Naive thymus-derived CD8-positive, alpha-beta T cell (primary cell): ENCODE measurements at regions of chr5 and their contacts with region 1.

Region 1: DNA sequence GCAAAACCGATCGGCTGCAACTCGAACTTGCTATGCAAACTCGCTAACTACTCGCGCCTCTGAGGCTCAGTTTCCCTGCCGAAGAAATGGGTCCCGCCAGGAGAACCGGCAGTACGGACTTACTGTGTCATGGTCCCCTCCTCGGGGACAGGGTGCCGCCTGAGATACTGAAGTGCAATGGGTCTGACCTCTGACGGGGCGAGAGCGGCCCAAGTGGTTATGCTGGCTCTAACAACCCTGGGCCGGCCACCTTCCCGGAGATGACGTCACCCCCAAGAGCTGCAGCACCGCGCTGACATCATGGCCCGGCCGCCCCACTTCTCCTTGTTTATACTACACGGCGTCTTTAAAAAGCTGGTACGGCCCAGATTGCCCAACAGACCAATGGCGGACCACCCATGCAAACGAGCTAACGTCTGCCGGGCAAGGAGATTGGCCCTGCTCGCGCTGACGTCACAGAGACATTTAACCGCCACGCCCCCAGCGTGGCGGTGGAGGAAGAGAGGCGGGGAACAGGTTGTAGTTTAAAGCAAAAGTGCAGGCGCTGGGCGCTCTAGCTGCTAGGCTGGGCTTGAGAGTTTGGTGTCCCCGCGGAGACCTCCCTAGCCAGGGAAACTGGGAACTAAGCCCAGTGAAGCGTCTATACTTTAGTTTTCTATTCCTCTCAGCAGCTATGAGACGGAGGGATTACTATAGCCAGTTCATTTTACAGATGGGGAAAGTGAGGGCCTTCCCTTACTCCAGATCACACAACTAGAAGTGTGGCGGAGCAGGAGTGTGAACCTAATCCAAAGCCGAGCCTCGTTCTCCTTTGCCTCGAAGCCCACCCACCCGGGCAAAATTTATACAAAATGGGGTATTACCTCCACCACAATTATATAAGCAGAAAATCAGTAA is 654 bp upstream of the RNF44 start:
- DNase-seq: peak; percentile 88 to 100 (median 98)
- ATAC-seq: peak; percentile 70 to 77
- H3K4me3 Mint-ChIP-seq: peak overlapping the region; percentile 94 to 100 (median 98)
- H3K27ac Mint-ChIP-seq: peak overlapping the region; percentile 97 to 100 (median 100)
- H3K4me1 Mint-ChIP-seq: peaks cover 54 to 77% (median 71%) of the 10 kb centered on the region in 4 donors
- H3K27me3 Mint-ChIP-seq: no peaks in the 10 kb centered on the region

Region 2: GRCh38 chr5:176361437-176362232 is 176.2 kb before region 1 on chr5 and contains the start of gene KIAA1191:
- POLR2A ChIA-PET with region 1: interaction called, 29 read pairs
- DNase-seq: peak; percentile 87 to 98 (median 92)
- ATAC-seq: peak; percentile 87 to 89
- H3K4me3 Mint-ChIP-seq: peak within 1 kb of the TSS; percentile 94 to 99 (median 97)
- H3K27ac Mint-ChIP-seq: peak within 1 kb of the TSS; percentile 91 to 99 (median 98)
- H3K4me1 Mint-ChIP-seq: peaks cover 15 to 57% (median 36%) of the 10 kb centered on the region in 4 donors
- H3K27me3 Mint-ChIP-seq: no peaks in the 10 kb centered on the region
- polyA plus RNA-seq, gene KIAA1191: 42.3 to 50.7 (median 50.5) TPM

Region 3: DNA sequence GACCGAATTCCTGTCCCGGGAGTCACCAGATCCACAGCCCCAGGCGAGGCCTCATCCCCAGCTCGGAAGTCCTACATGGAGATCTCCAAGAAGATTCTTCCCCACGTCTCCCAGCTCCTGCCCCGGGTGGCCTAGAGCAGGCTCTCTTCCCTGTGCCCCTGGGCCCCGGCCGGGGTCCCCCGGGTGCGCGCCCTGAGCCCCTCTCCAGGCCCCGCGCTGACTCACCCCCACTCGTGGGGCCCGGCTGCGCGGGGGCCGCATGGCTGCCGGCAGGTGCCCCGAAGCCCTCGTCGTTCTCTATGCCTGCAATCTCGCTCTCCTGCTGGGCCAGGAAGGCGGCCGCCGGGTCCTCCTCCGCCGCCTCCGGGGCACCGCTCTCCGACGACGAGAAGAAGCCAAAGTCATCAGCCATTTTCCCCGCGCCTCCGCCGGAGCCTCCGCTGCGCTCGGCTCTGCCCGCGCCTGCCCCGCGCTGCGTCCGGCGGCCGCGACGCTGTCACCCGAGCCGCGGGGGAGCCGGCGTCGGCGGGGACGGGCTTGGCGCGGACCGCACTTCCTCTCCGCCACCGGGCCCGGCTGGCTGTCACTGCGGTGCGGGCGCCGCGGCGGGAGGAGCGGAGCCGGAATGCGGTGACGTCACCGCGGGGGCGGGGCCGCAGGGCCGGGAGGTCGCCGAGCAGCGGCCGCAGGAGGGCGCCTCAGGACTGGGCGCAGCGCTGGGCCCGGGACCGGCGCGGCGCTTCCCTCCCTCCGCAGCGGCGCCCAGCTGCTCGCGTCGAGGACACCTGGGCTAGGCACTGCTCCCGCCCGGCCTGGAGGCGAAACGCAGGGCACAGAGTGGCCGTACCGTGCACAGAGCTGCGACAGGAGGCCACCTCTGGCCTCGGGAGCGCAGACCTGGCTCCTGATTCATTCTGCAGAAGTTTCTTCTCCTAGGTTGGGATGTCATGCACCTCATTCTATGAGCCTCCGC is 121.6 kb before region 1 on chr5 and contains the start of gene CLTB:
- POLR2A ChIA-PET with region 1: interaction called, 60 read pairs
- DNase-seq: peak; percentile 72 to 98 (median 85)
- ATAC-seq: peak; percentile 90 to 91
- H3K4me3 Mint-ChIP-seq: peak within 1 kb of the TSS; percentile 77 to 88 (median 82)
- H3K27ac Mint-ChIP-seq: peak within 1 kb of the TSS; percentile 72 to 92 (median 88)
- H3K4me1 Mint-ChIP-seq: peaks cover 20 to 52% (median 46%) of the 10 kb centered on the region in 4 donors
- H3K27me3 Mint-ChIP-seq: no peaks in the 10 kb centered on the region
- polyA plus RNA-seq, gene CLTB: 69.2 to 82.7 (median 73.5) TPM

Region 4: GRCh38 chr5:176447982-176448608 is 89.8 kb before region 1 on chr5 and contains the start of gene FAF2:
- POLR2A ChIA-PET with region 1: interaction called, 88 read pairs
- DNase-seq: peak; percentile 95 to 100 (median 98)
- ATAC-seq: peak; percentile 96 to 97
- H3K4me3 Mint-ChIP-seq: peak within 1 kb of the TSS; percentile 90 to 100 (median 97)
- H3K27ac Mint-ChIP-seq: peak within 1 kb of the TSS; percentile 96 to 99 (median 98)
- H3K4me1 Mint-ChIP-seq: peaks cover 17 to 52% (median 44%) of the 10 kb centered on the region in 4 donors
- H3K27me3 Mint-ChIP-seq: peaks cover 0 to 3% (median 0%) of the 10 kb centered on the region in 5 donors
- polyA plus RNA-seq, gene FAF2: 9.5 to 12.0 (median 11.4) TPM

Region 5: GRCh38 chr5:176647030-176647866 is 109.4 kb after region 1 on chr5 and contains the start of gene TSPAN17:
- POLR2A ChIA-PET with region 1: interaction called, 13 read pairs
- DNase-seq: peak; percentile 87 to 98 (median 93)
- ATAC-seq: peak; percentile 83 to 84
- H3K4me3 Mint-ChIP-seq: peak within 1 kb of the TSS; percentile 80 to 94 (median 90)
- H3K27ac Mint-ChIP-seq: peak within 1 kb of the TSS; percentile 80 to 96 (median 91)
- H3K4me1 Mint-ChIP-seq: peaks cover 35 to 61% (median 56%) of the 10 kb centered on the region in 4 donors
- H3K27me3 Mint-ChIP-seq: no peaks in the 10 kb centered on the region
- polyA plus RNA-seq, gene TSPAN17: 13.5 to 26.0 (median 18.4) TPM